Naive thymus-derived CD4-positive, alpha-beta T cell (primary cell): ENCODE measurements at regions of chr1 and their contacts with region 1.

Region 1: GRCh38 chr1:225911191-225912130 is 12.6 kb downstream of the PYCR2 start:
- DNase-seq: peak; percentile 59 to 87 (median 75)
- ATAC-seq: peak; percentile 88
- H3K4me3 ChIP-seq: no peak overlapping the region
- H3K4me3 Mint-ChIP-seq: peak overlapping the region in 4 of 10 donors; percentile 5 to 51 (median 24)
- H3K27ac ChIP-seq: peak overlapping the region; percentile 34
- H3K27ac Mint-ChIP-seq: peak overlapping the region in 7 of 9 donors; percentile 45 to 80 (median 68)
- H3K4me1 ChIP-seq: peaks cover 11 to 28% of the 10 kb centered on the region in 2 donors
- H3K4me1 Mint-ChIP-seq: peaks cover 18 to 53% (median 35%) of the 10 kb centered on the region in 7 donors
- H3K27me3 ChIP-seq: no peaks in the 10 kb centered on the region
- H3K27me3 Mint-ChIP-seq: peaks cover 0 to 5% (median 0%) of the 10 kb centered on the region in 5 donors

Region 2: GRCh38 chr1:225474986-225475820 is 436.3 kb before region 1 on chr1:
- CTCF ChIA-PET with region 1: interaction called, 6 read pairs
- POLR2A ChIA-PET with region 1: no interaction called
- intact Hi-C with region 1: loop called (anchors 1 kb)
- DNase-seq: peak; percentile 36 to 88 (median 68)
- ATAC-seq: peak; percentile 96
- H3K4me3 ChIP-seq: no peak overlapping the region
- H3K4me3 Mint-ChIP-seq: peak overlapping the region in 5 of 10 donors; percentile 38 to 59 (median 56)
- H3K27ac ChIP-seq: no peak overlapping the region
- H3K27ac Mint-ChIP-seq: peak overlapping the region in 2 of 9 donors; percentile 38 to 87
- H3K4me1 ChIP-seq: peaks cover 11 to 37% of the 10 kb centered on the region in 2 donors
- H3K4me1 Mint-ChIP-seq: peaks cover 36 to 61% (median 52%) of the 10 kb centered on the region in 7 donors
- H3K27me3 ChIP-seq: no peaks in the 10 kb centered on the region
- H3K27me3 Mint-ChIP-seq: peaks cover 0 to 5% (median 0%) of the 10 kb centered on the region in 5 donors

Region 3: GRCh38 chr1:225845571-225846259 is 65.7 kb before region 1 on chr1:
- CTCF ChIA-PET with region 1: interaction called, 5 read pairs
- POLR2A ChIA-PET with region 1: interaction called, 4 read pairs
- intact Hi-C with region 1: loop called in 1 of 2 experiments (anchors 1 kb)
- DNase-seq: peak in 4 of 9 donors; percentile 35 to 55 (median 46)
- ATAC-seq: peak; percentile 36
- H3K4me3 ChIP-seq: no peak overlapping the region
- H3K4me3 Mint-ChIP-seq: no peak overlapping the region
- H3K27ac ChIP-seq: no peak overlapping the region
- H3K27ac Mint-ChIP-seq: peak overlapping the region in 6 of 9 donors; percentile 12 to 98 (median 36)
- H3K4me1 ChIP-seq: peaks cover 37 to 38% of the 10 kb centered on the region in 2 donors
- H3K4me1 Mint-ChIP-seq: peaks cover 19 to 50% (median 43%) of the 10 kb centered on the region in 7 donors
- H3K27me3 ChIP-seq: no peaks in the 10 kb centered on the region
- H3K27me3 Mint-ChIP-seq: no peaks in the 10 kb centered on the region

Region 4: GRCh38 chr1:225881969-225882693 is 29.3 kb before region 1 on chr1 and contains the start of gene TMEM63A:
- CTCF ChIA-PET with region 1: interaction called, 46 read pairs
- POLR2A ChIA-PET with region 1: interaction called, 152 read pairs
- intact Hi-C with region 1: loop called (anchors 1 kb)
- DNase-seq: peak; percentile 83 to 89 (median 87)
- ATAC-seq: peak; percentile 84
- H3K4me3 ChIP-seq: peak within 1 kb of the TSS; percentile 80
- H3K4me3 Mint-ChIP-seq: peak within 1 kb of the TSS; percentile 89 to 99 (median 97)
- H3K27ac ChIP-seq: peak within 1 kb of the TSS; percentile 90
- H3K27ac Mint-ChIP-seq: peak within 1 kb of the TSS; percentile 91 to 98 (median 96)
- H3K4me1 ChIP-seq: peaks cover 41% of the 10 kb centered on the region in 2 donors
- H3K4me1 Mint-ChIP-seq: peaks cover 37 to 50% (median 48%) of the 10 kb centered on the region in 7 donors
- H3K27me3 ChIP-seq: no peaks in the 10 kb centered on the region
- H3K27me3 Mint-ChIP-seq: peaks cover 0 to 21% (median 0%) of the 10 kb centered on the region in 5 donors
- total RNA-seq, gene TMEM63A: 189 to 611 (median 383) TPM

Region 5: GRCh38 chr1:225896937-225897549 is 14.4 kb before region 1 on chr1:
- CTCF ChIA-PET with region 1: interaction called, 8 read pairs
- POLR2A ChIA-PET with region 1: interaction called, 44 read pairs
- intact Hi-C with region 1: loop called (anchors 1 kb)
- DNase-seq: peak in 8 of 9 donors; percentile 70 to 92 (median 88)
- ATAC-seq: peak; percentile 97
- H3K4me3 ChIP-seq: peak overlapping the region; percentile 50
- H3K4me3 Mint-ChIP-seq: peak overlapping the region; percentile 74 to 89 (median 84)
- H3K27ac ChIP-seq: peak overlapping the region; percentile 85
- H3K27ac Mint-ChIP-seq: peak overlapping the region; percentile 89 to 100 (median 97)
- H3K4me1 ChIP-seq: peaks cover 35 to 45% of the 10 kb centered on the region in 2 donors
- H3K4me1 Mint-ChIP-seq: peaks cover 36 to 67% (median 54%) of the 10 kb centered on the region in 7 donors
- H3K27me3 ChIP-seq: no peaks in the 10 kb centered on the region
- H3K27me3 Mint-ChIP-seq: peaks cover 0 to 47% (median 0%) of the 10 kb centered on the region in 5 donors

Region 6: GRCh38 chr1:225977937-225978748 is 66.7 kb after region 1 on chr1:
- CTCF ChIA-PET with region 1: interaction called, 5 read pairs
- POLR2A ChIA-PET with region 1: no interaction called
- intact Hi-C with region 1: loop called (anchors 1 to 5 kb)
- DNase-seq: no peak
- ATAC-seq: peak; percentile 30
- H3K4me3 ChIP-seq: no peak overlapping the region
- H3K4me3 Mint-ChIP-seq: no peak overlapping the region
- H3K27ac ChIP-seq: no peak overlapping the region
- H3K27ac Mint-ChIP-seq: peak overlapping the region in 1 of 9 donors; percentile 20
- H3K4me1 ChIP-seq: no peaks in the 10 kb centered on the region
- H3K4me1 Mint-ChIP-seq: peaks cover 0 to 9% (median 6%) of the 10 kb centered on the region in 7 donors
- H3K27me3 ChIP-seq: no peaks in the 10 kb centered on the region
- H3K27me3 Mint-ChIP-seq: no peaks in the 10 kb centered on the region

Region 7: GRCh38 chr1:225990705-225991464 is 79.4 kb after region 1 on chr1:
- CTCF ChIA-PET with region 1: no interaction called
- POLR2A ChIA-PET with region 1: no interaction called
- intact Hi-C with region 1: no loop called
- DNase-seq: no peak
- ATAC-seq: no peak
- H3K4me3 ChIP-seq: no peak overlapping the region
- H3K4me3 Mint-ChIP-seq: peak overlapping the region in 1 of 10 donors; percentile 56
- H3K27ac ChIP-seq: peak overlapping the region; percentile 54
- H3K27ac Mint-ChIP-seq: peak overlapping the region; percentile 28 to 77 (median 57)
- H3K4me1 ChIP-seq: peaks cover 2 to 14% of the 10 kb centered on the region in 2 donors
- H3K4me1 Mint-ChIP-seq: peaks cover 12 to 43% (median 37%) of the 10 kb centered on the region in 7 donors
- H3K27me3 ChIP-seq: no peaks in the 10 kb centered on the region
- H3K27me3 Mint-ChIP-seq: no peaks in the 10 kb centered on the region